CD4-positive, alpha-beta T cell (primary cell): ENCODE measurements at regions of chr1 and their contacts with region 1.

Region 1: GRCh38 chr1:109548321-109549267 is at the start of gene GNAI3:
- DNase-seq: peak; percentile 91 to 98 (median 95)
- ATAC-seq: peak; percentile 90
- H3K4me3 ChIP-seq: peak within 1 kb of the TSS; percentile 73
- H3K4me3 Mint-ChIP-seq: peak within 1 kb of the TSS; percentile 99
- H3K27ac ChIP-seq: peak within 1 kb of the TSS; percentile 87 to 92
- H3K27ac Mint-ChIP-seq: peak within 1 kb of the TSS; percentile 97
- H3K4me1 ChIP-seq: peaks cover 21% of the 10 kb centered on the region
- H3K4me1 Mint-ChIP-seq: peaks cover 57% of the 10 kb centered on the region
- H3K27me3 ChIP-seq: no peaks in the 10 kb centered on the region
- H3K27me3 Mint-ChIP-seq: no peaks in the 10 kb centered on the region
- CTCF ChIP-seq: no peak
- total RNA-seq, gene GNAI3: 5.1 to 5.4 TPM

Region 2: GRCh38 chr1:109493805-109494539 is 54.6 kb before region 1 on chr1 and contains the start of gene CYB561D1:
- CTCF ChIA-PET with region 1: interaction called, 11 read pairs
- POLR2A ChIA-PET with region 1: interaction called, 7 read pairs
- intact Hi-C with region 1: no loop called
- DNase-seq: peak; percentile 78 to 94 (median 88)
- ATAC-seq: peak; percentile 90
- H3K4me3 ChIP-seq: peak within 1 kb of the TSS; percentile 100
- H3K4me3 Mint-ChIP-seq: peak within 1 kb of the TSS; percentile 97
- H3K27ac ChIP-seq: peak within 1 kb of the TSS; percentile 59 to 66
- H3K27ac Mint-ChIP-seq: peak within 1 kb of the TSS; percentile 88
- H3K4me1 ChIP-seq: peaks cover 62% of the 10 kb centered on the region
- H3K4me1 Mint-ChIP-seq: peaks cover 54% of the 10 kb centered on the region
- H3K27me3 ChIP-seq: no peaks in the 10 kb centered on the region
- H3K27me3 Mint-ChIP-seq: no peaks in the 10 kb centered on the region
- CTCF ChIP-seq: peak; percentile 92
- total RNA-seq, gene CYB561D1: 12.0 to 15.0 TPM

Region 3: DNA sequence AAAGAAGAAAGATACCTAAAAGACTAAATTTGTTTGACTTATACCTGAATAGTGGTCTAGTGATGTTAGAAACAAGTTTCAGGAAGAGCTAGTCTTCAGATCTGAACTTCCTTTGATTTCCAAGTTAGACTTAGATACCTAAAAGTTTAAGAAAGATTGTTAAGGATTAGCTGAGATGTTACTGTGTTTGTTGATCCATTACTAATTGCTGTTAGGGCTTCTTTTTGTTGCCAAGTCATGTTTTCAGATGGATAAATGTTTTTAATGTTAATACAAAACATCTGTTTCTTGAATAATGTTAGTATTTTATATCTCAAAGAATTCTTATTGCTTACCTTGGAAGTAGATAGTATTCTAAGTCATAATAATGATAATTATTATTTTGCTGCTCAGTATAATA is 11.4 kb after region 1 on chr1:
- CTCF ChIA-PET with region 1: interaction called, 5 read pairs
- POLR2A ChIA-PET with region 1: interaction called, 26 read pairs
- intact Hi-C with region 1: no loop called
- DNase-seq: no peak
- ATAC-seq: no peak
- H3K4me3 ChIP-seq: no peak overlapping the region
- H3K4me3 Mint-ChIP-seq: peak overlapping the region; percentile 54
- H3K27ac ChIP-seq: no peak overlapping the region
- H3K27ac Mint-ChIP-seq: peak overlapping the region; percentile 8
- H3K4me1 ChIP-seq: peaks cover 25% of the 10 kb centered on the region
- H3K4me1 Mint-ChIP-seq: peaks cover 90% of the 10 kb centered on the region
- H3K27me3 ChIP-seq: no peaks in the 10 kb centered on the region
- H3K27me3 Mint-ChIP-seq: no peaks in the 10 kb centered on the region
- CTCF ChIP-seq: no peak

Region 4: GRCh38 chr1:109620841-109621286 is 72.3 kb after region 1 on chr1:
- CTCF ChIA-PET with region 1: interaction called, 10 read pairs
- POLR2A ChIA-PET with region 1: interaction called, 52 read pairs
- intact Hi-C with region 1: loop called (anchors 1 kb)
- DNase-seq: peak; percentile 91 to 99 (median 97)
- ATAC-seq: peak; percentile 86
- H3K4me3 ChIP-seq: peak overlapping the region; percentile 91
- H3K4me3 Mint-ChIP-seq: peak overlapping the region; percentile 99
- H3K27ac ChIP-seq: peak overlapping the region; percentile 85 to 95
- H3K27ac Mint-ChIP-seq: peak overlapping the region; percentile 89
- H3K4me1 ChIP-seq: peaks cover 80% of the 10 kb centered on the region
- H3K4me1 Mint-ChIP-seq: peaks cover 82% of the 10 kb centered on the region
- H3K27me3 ChIP-seq: no peaks in the 10 kb centered on the region
- H3K27me3 Mint-ChIP-seq: no peaks in the 10 kb centered on the region
- CTCF ChIP-seq: no peak

Region 5: DNA sequence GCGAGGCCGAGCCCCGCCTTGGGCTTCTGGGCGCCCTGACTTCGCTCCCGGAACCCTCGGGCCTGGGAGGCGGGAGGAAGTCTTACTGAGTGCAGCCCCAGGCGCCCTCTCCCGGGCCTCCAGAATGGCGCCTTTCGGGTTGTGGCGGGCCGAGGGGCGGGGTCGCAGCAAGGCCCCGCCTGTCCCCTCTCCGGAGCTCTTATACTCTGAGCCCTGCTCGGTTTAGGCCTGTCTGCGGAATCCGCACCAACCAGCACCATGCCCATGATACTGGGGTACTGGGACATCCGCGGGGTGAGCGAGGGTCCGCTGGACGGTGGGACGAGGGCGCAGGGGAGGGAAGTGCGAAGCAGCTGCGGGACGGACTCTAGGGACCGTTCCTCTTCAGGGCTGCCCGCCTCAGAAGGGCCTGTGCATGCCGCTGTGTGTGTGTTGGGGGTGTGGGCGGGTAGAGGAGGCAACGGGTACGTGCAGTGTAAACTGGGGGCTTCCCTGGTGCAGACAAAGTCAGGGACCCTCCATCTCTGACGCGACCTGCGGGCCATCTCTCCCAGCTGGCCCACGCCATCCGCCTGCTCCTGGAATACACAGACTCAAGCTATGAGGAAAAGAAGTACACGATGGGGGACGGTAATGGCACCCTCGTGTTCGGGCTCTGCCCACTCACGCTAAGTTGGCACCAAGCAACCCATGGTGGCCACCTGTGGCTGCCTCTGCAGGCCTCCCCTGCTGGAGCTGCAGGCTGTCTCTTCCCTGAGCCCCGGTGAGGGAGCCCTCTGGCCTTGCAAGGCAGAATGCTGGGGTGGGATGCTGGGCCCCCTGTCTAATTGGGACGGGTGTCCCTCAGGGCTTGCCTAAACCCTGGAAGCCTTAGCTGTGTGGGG is 139.3 kb after region 1 on chr1 and contains the start of gene GSTM1:
- CTCF ChIA-PET with region 1: no interaction called
- POLR2A ChIA-PET with region 1: interaction called, 19 read pairs
- intact Hi-C with region 1: loop called (anchors 2 kb)
- DNase-seq: peak in 9 of 14 experiments; percentile 59 to 87 (median 79)
- ATAC-seq: peak; percentile 99
- H3K4me3 ChIP-seq: peak within 1 kb of the TSS; percentile 67
- H3K4me3 Mint-ChIP-seq: peak within 1 kb of the TSS; percentile 95
- H3K27ac ChIP-seq: no peak within 1 kb of the TSS
- H3K27ac Mint-ChIP-seq: peak within 1 kb of the TSS; percentile 86
- H3K4me1 ChIP-seq: no peaks in the 10 kb centered on the region
- H3K4me1 Mint-ChIP-seq: peaks cover 23% of the 10 kb centered on the region
- H3K27me3 ChIP-seq: no peaks in the 10 kb centered on the region
- H3K27me3 Mint-ChIP-seq: no peaks in the 10 kb centered on the region
- CTCF ChIP-seq: peak; percentile 63
- total RNA-seq, gene GSTM1: 31.9 to 36.2 TPM

Region 6: DNA sequence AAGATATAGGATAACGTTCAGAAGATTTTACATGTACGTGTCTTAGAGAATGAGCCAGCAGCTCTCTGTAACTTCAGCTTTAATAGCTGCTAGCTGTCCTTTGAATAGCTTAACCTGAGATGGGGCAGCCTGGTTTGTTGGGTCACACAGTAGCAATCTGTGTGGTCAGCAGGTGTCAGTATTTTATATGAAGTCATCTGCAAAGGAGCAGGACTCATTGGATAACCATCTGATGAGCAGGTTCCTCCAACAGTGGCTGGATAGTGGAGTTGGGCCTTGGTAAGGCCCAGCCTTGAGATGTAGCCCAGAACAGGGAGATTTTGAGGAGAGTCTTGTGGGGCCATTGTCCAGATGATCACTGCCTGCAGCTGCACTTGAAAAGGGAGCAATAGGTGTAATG is 169.9 kb after region 1 on chr1:
- CTCF ChIA-PET with region 1: no interaction called
- POLR2A ChIA-PET with region 1: no interaction called
- intact Hi-C with region 1: no loop called
- DNase-seq: no peak
- ATAC-seq: no peak
- H3K4me3 ChIP-seq: no peak overlapping the region
- H3K4me3 Mint-ChIP-seq: no peak overlapping the region
- H3K27ac ChIP-seq: no peak overlapping the region
- H3K27ac Mint-ChIP-seq: no peak overlapping the region
- H3K4me1 ChIP-seq: no peaks in the 10 kb centered on the region
- H3K4me1 Mint-ChIP-seq: no peaks in the 10 kb centered on the region
- H3K27me3 ChIP-seq: no peaks in the 10 kb centered on the region
- H3K27me3 Mint-ChIP-seq: peaks cover 14% of the 10 kb centered on the region
- CTCF ChIP-seq: no peak

Region 7: DNA sequence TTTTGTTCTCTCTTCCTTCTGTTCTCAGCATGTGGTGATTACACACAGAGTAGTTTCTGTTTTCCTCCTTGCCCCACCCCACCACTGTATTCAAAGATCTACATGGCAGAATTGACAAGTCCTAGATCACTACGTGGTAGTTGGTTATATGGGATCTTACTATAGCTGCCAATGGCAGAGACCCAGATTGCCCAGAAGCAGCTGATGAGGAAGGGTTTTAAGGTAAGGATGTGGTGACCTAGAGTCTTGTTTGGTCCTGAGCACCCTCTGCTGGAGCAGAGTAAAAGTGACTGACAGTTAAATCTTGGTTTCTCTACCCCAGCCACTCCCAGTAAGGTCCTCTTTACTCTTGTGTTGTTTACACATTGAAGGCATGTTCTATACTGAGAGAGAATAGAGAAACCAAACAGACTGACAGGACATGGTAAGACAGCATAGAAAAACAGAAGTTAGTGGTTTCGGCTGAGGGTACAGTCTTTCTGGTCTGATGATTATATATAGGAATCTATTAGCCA is 463.0 kb after region 1 on chr1:
- CTCF ChIA-PET with region 1: no interaction called
- POLR2A ChIA-PET with region 1: interaction called, 4 read pairs
- intact Hi-C with region 1: loop called in 1 of 2 experiments (anchors 1 kb)
- DNase-seq: peak in 6 of 14 experiments; percentile 9 to 69 (median 42)
- ATAC-seq: peak; percentile 96
- H3K4me3 ChIP-seq: no peak overlapping the region
- H3K4me3 Mint-ChIP-seq: no peak overlapping the region
- H3K27ac ChIP-seq: no peak overlapping the region
- H3K27ac Mint-ChIP-seq: peak overlapping the region; percentile 56
- H3K4me1 ChIP-seq: no peaks in the 10 kb centered on the region
- H3K4me1 Mint-ChIP-seq: peaks cover 14% of the 10 kb centered on the region
- H3K27me3 ChIP-seq: no peaks in the 10 kb centered on the region
- H3K27me3 Mint-ChIP-seq: no peaks in the 10 kb centered on the region
- CTCF ChIP-seq: no peak